Activated T-helper 1 cell treated with anti-CD3 and anti-CD28 coated beads, Interleukin-12 subunit alpha, Interleukin-12 subunit beta, Interleukin-2, Interleukin-4 antibody, amounts not matched to agents 30 ng/mL and 10 ng/mL and 1 ng/mL, durations not matched to agents 14 hours and 24 hours and 36 hours (primary cell): ENCODE measurements at regions of chr7 and their contacts with region 1.

Region 1: GRCh38 chr7:43925984-43926797 is at the start of gene UBE2D4:
- DNase-seq: peak; percentile 88
- H3K4me3 Mint-ChIP-seq: peak within 1 kb of the TSS; percentile 95
- H3K27ac Mint-ChIP-seq: peak within 1 kb of the TSS; percentile 97
- H3K4me1 Mint-ChIP-seq: peaks cover 30% of the 10 kb centered on the region
- H3K27me3 Mint-ChIP-seq: peaks cover 2% of the 10 kb centered on the region
- total RNA-seq, gene UBE2D4: 15.3 and 17.7 TPM in 2 replicates

Region 2: DNA sequence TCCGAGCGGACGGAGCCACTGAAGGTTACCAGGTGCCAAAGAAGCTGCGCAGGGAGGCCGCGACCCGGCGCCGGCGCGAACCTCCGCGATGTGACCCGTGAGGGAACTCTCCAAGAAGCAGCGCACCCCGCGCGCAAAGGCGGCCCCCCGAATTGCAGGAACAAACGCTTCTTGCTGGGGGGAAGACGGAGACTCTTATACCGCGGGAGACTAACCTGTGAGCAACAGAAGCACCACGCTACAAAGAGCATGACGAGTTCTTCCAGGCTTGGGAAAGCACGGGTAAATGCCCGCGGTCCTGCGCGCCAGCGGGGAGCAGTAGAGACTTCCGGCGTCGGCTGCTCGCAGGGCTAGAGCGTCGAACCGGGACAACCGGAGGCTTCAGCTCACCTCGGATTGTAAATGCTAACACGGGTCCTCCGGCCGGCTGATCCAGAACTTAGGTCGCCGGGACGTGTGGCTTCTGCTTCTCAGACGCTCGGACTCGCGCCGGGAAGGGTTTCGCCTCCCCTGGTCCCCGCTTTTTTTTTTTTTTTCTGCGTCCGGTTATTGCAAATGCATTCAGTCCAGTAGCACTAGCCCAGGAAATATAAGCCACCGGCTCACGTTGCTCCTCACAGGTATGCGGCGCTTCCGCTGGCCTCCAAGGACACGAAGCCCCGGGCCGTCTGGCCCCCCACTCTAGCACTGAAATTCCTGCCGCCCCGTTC is 196.8 kb before region 1 on chr7 and contains the start of gene COA1:
- intact Hi-C with region 1: loop called (anchors 10 kb)
- DNase-seq: peak; percentile 76
- H3K4me3 Mint-ChIP-seq: peak within 1 kb of the TSS; percentile 88
- H3K27ac Mint-ChIP-seq: peak within 1 kb of the TSS; percentile 76
- H3K4me1 Mint-ChIP-seq: peaks cover 28% of the 10 kb centered on the region
- H3K27me3 Mint-ChIP-seq: peaks cover 3% of the 10 kb centered on the region
- total RNA-seq, gene COA1: 81.7 and 88.6 TPM in 2 replicates

Region 3: DNA sequence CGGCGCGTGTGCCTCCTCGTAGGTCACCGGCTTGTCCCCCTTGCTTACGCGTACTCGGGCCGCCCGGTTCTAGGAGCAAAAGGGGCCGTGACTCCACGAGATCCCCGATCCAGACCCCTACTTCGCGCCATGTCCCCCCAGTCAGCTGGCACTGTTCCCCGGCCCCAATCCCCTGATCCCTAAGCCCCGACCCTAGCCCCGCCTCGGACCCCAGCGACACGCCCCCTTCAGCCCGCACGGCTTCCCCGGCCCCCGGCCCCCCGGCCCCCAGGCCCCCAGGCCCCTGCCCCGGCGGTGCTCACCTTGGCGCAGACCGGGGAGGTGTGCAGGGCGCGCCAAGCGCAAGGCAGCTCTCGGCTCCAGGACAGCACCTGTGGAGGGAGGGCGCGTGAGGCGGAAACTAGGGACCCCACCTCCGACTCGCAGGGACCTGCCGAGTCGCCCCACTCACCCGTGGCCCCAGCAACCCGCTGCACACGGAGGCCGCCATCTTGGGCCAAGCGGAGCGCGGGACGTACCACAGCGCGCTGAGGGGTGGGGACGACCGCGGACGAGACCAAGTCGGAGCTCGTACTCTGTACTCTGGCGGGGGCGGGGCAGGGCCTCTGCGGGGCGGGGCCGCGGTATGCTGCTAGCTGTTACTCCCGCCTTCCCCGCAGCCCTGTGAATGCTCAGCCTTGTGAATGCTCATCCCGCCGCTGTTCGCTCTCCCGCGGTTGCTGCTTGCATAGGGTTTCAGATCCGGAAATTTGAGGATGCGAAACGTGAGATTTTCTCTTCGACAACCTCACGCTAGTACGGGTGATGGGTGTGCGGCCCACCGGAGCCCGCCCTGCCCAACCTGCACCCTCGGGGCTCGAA is 57.0 kb before region 1 on chr7 and contains the start of gene MRPS24:
- intact Hi-C with region 1: loop called (anchors 1 kb)
- DNase-seq: peak; percentile 88
- H3K4me3 Mint-ChIP-seq: peak within 1 kb of the TSS; percentile 85
- H3K27ac Mint-ChIP-seq: peak within 1 kb of the TSS; percentile 85
- H3K4me1 Mint-ChIP-seq: peaks cover 23% of the 10 kb centered on the region
- H3K27me3 Mint-ChIP-seq: no peaks in the 10 kb centered on the region
- total RNA-seq, gene MRPS24: 118 and 125 TPM in 2 replicates

Region 4: GRCh38 chr7:43895847-43896415 is 30.3 kb before region 1 on chr7:
- intact Hi-C with region 1: no loop called
- DNase-seq: no peak
- H3K4me3 Mint-ChIP-seq: no peak overlapping the region
- H3K27ac Mint-ChIP-seq: no peak overlapping the region
- H3K4me1 Mint-ChIP-seq: peaks cover 9% of the 10 kb centered on the region
- H3K27me3 Mint-ChIP-seq: no peaks in the 10 kb centered on the region

Region 5: DNA sequence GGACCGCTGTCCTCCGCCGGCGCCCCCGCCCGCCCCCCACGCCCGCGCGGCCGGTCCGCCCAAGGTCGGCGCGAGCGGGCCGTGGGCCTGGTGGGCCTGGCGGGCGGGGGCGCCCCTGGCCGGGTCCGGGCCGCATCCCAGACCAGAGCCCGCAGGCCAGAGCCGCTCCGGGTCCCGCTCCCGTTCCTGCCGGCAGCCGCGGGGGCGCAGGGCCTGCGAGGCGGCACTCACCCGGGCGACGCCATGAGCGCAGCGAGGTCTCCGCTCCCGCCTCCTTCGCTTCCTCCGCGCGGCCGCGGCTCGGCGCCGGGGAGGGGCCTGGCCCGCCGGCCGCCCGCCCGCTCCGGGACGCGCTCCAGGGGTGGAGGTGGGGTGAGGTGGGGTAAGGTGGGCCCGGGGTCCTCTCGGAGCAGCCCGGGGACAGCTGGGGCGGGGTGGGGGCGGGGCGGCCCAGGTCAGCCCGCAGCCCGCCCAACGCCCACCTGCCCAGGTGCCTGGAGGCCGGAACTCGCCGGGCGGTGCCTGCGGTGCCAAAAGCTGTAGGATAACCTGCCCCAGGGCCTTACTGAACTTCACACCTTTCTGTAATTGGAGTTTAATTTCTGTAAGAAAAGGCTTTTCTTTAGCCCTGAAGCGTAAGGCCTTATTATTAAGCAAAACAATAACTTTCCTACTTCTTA is 19.7 kb before region 1 on chr7 and contains the start of gene URGCP:
- intact Hi-C with region 1: loop called (anchors 1 kb)
- DNase-seq: peak; percentile 46
- H3K4me3 Mint-ChIP-seq: peak within 1 kb of the TSS; percentile 95
- H3K27ac Mint-ChIP-seq: peak within 1 kb of the TSS; percentile 97
- H3K4me1 Mint-ChIP-seq: peaks cover 28% of the 10 kb centered on the region
- H3K27me3 Mint-ChIP-seq: peaks cover 2% of the 10 kb centered on the region
- total RNA-seq, gene URGCP: 32.2 and 34.4 TPM in 2 replicates

Region 6: GRCh38 chr7:43942997-43943704 is 17.0 kb after region 1 on chr7:
- intact Hi-C with region 1: no loop called
- DNase-seq: no peak
- H3K4me3 Mint-ChIP-seq: no peak overlapping the region
- H3K27ac Mint-ChIP-seq: no peak overlapping the region
- H3K4me1 Mint-ChIP-seq: no peaks in the 10 kb centered on the region
- H3K27me3 Mint-ChIP-seq: no peaks in the 10 kb centered on the region

Region 7: GRCh38 chr7:43977525-43977924 is 51.3 kb after region 1 on chr7:
- intact Hi-C with region 1: no loop called
- DNase-seq: no peak
- H3K4me3 Mint-ChIP-seq: no peak overlapping the region
- H3K27ac Mint-ChIP-seq: no peak overlapping the region
- H3K4me1 Mint-ChIP-seq: no peaks in the 10 kb centered on the region
- H3K27me3 Mint-ChIP-seq: no peaks in the 10 kb centered on the region